Cardiac septum (tissue), 1 donor: ENCODE measurements at regions of chr4 and their contacts with region 1.

Region 1: GRCh38 chr4:139295206-139295941 is 5.9 kb upstream of the NAA15 start:
- DNase-seq: peak; percentile 99

Region 2: DNA sequence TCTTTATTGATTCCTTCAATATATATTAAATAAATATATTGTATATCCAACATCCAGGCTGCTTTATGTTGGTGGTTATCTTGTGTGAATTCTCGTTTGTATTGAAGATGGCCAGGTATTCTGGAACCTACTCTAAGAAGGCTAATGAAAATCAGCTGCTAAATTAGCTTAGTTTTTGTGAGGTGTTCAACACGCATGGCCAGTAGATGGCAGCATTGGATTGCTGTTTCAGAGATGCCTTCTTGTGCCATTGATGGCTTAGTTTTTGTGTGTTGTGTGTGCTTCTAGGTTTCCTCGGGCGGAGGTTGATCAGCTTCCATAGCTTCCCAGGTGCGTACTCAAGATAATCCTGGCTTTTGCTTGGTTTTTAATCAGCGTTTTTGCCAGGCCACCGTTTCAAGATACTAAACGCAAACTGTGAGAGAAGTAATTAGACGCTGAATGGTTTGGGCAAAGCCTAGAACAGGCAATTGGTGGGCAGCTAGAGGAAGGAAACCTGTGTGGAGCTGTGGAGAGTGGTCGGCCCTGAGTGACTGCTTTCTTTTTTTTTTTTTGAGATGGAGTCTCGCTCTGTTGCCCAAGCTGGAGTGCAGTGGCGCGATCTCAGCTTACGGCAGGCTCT is 264.6 kb before region 1 on chr4:
- intact Hi-C with region 1: loop called (anchors 5 kb)
- DNase-seq: no peak

Region 3: DNA sequence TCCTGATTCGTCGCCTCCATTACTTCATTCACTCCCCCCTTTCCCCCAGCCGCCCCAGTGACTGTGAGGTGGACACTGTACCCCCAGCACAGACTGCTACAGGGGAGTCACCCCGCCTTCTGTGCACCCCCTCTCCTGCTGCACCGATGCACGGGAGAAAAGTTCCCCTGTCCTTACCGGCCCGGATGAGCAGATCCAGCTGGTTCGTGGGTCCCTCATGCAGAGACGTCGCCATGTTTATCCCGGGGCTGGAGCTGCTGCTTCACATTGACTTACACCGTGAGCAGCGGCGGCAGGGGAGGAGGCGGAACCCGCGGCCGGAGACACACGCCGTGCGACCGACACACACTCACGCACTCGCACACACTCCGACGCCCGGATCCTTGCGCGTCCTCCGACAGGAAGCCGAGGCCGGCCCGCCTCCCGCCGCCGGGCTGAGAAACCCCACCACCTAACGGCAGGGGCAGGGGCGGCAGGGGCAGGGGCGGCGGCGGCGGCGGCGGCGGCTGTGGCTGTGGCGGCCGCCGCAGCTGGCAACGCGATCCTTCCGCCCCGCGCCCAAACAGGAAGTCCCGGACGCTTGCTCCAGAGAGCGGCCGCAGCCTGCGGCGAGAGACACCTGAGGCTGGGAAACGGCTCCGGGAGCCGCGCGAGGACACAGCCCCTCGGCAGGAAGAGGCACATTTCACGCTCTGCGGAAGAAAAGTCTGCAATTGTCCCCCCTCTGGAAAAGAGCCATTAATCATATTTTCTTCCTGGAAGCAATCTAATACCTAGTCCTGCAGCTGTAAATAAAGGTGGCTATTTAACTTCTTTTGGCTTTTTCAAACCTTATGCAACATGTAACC is 211.2 kb before region 1 on chr4:
- intact Hi-C with region 1: loop called (anchors 1 kb)
- DNase-seq: peak; percentile 93

Region 4: DNA sequence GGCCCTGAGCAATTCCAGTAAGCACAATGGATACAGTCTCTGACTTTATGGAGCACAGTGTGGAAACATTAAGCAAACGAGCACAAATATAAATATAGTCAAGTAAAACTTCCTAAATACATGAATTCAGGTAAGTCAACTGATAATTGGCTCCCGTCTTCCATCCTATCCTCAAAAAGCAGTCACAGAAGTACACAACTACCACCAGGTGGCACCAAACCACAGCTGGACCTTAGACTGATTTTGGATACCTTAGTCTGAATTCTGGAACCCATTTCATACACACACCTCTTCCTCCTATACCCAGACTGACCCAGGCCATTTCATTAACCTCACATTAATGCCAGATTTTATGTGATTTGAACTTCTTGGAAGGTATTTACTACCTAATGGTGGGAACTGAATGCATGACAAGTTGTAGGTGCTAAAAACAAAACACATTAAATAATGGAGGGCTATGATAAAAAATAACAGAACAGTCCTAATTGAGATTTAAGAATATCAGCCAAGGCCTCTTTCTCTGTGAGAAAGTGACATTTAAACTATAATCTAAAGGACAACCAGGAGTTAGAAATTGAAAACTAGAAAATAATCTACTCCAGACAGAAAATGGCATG is 195.9 kb before region 1 on chr4:
- intact Hi-C with region 1: loop called (anchors 5 kb)
- DNase-seq: no peak

Region 5: DNA sequence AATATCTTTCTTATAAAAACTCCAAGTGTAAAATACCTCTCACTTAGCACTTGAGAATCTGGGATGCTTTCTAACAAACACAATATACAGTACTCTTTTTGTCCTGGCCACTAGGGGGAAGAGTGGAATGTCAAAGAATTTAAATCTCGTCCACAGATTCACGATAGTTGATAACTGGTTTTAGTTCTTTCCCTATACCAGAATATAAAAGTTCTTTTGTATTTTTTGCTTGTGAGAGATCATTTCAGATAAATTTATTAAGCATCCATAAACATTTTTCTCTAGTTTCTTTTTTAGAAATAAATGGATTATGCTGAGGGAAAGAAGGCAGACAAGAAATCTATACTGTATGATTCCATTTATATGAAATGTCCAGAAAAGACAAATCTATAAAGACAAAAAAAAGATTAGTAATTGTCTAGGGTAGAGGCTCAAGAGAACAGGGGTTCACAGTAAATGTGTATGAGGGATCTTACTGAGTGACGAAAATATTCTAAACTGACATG is 65.8 kb before region 1 on chr4:
- intact Hi-C with region 1: loop called (anchors 5 kb)
- DNase-seq: no peak